Right cardiac atrium (tissue), 5 donors: ENCODE measurements at regions of chr12 and their contacts with region 1.

Region 1: DNA sequence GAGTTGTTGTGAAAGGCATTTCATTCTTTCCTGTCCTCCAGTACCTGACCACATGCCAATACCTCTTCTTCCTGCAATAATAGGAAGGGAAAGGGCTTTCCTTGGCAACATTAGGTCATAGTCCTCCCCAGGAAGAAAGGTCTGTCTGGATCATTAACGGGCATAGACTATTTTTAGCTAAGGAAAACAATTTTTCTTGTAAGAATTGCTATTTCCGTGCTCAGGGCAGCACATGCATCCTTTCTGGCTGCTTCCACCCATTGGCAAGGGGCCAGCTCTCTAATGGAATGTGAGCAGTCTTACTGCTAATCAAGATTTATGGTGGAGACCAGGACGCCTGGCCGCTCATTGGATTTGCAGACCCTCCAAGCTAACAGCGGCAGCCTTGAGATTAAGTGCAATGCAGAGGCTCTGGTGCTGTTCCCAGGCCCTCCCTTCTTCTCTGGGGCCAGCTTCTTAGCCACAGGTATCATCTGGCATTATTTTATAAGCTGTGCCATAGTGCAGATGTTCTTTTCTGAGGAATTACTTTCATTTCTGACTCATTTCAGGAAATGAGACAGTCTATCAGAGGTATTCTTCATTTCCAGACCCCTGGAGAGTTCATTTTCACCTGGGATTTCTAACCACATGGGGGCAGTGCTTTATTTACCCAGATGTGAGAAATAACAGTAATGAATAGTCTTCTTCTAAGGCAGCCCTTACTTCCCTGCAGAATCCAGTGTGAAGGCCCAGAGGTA is 52.9 kb downstream of the ANO6 start:
- DNase-seq: peak; percentile 88 to 94 (median 90)
- ATAC-seq: peak; percentile 72 to 82
- H3K4me3 ChIP-seq: peak overlapping the region; percentile 27
- H3K27ac ChIP-seq: peak overlapping the region; percentile 91
- H3K4me1 ChIP-seq: peaks cover 6% of the 10 kb centered on the region
- H3K27me3 ChIP-seq: no peaks in the 10 kb centered on the region

Region 2: GRCh38 chr12:45215419-45216229 is 53.2 kb before region 1 on chr12 and contains the start of gene ANO6:
- intact Hi-C with region 1: loop called in 1 of 4 experiments (anchors 5 kb)
- DNase-seq: peak; percentile 89 to 95 (median 95)
- ATAC-seq: peak; percentile 96 to 97
- H3K4me3 ChIP-seq: peak within 1 kb of the TSS; percentile 86
- H3K27ac ChIP-seq: peak within 1 kb of the TSS; percentile 92
- H3K4me1 ChIP-seq: peaks cover 4% of the 10 kb centered on the region
- H3K27me3 ChIP-seq: no peaks in the 10 kb centered on the region
- total RNA-seq, gene ANO6: 42.2 to 51.0 (median 47.5) TPM

Region 3: DNA sequence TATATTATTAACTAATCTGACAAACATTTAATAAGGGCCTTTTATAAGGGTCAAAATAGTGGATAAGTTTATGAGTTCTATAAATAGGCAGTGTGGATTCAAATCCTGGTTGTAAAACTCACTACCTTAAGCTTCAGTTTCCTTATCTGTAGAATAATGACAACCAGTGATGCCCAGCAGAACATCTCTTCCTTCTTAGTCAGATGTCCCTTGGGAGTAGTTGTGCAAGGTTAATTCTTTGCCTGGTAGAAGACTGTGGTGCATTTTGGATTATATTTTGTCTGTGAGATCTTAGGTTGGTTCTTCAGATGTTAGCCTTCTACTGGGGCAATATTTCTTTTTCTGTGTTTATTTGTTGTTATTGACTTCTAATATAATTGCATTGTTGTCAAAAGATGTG is 520.2 kb after region 1 on chr12:
- intact Hi-C with region 1: no loop called
- DNase-seq: no peak
- ATAC-seq: peak in 1 of 2 donors; percentile 64
- H3K4me3 ChIP-seq: no peak overlapping the region
- H3K27ac ChIP-seq: no peak overlapping the region
- H3K4me1 ChIP-seq: no peaks in the 10 kb centered on the region
- H3K27me3 ChIP-seq: no peaks in the 10 kb centered on the region